ENCODE measurements at regions of chr12 and their contacts with region 1.

Region 1: DNA sequence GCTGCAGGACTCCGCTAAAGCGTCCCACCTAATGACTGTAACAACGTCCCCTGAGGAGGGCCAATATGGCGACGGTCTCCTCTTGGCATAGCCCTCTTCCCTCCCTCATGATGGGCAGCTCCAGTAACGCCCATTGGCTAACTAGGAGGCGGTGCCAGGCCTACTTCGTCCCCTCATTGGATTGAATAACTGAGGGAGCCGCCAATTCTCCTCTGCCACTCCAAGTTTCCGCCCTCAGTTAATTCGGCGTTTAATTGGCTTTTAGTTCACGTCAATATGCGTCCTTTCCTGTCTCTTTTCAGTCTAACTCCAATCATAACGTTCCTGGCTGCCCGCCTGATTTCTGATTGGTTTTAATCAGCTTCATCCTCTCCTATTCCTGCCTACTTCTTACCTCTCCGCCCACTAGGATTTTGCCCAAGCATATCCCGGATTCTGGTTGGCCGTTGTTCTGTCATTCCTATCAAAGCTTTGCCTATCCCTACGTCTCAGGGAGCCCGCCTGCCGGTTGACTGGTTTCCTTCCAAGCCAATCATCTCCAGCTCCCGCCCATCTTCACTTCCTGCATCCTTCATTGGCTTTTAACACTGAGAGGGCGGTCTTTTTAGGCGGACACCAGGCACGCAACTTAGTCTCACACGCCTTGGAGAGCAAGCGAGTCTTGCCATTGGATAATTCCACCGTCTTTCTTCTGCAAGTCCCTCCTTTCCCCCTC is 430 bp upstream of the SP1 start:
- DNase-seq: peak; percentile 100
- H3K4me3 ChIP-seq: peak overlapping the region; percentile 32 to 55 (median 45)
- H3K27ac ChIP-seq: peak overlapping the region; percentile 65
- H3K4me1 ChIP-seq: peaks cover 38% of the 10 kb centered on the region
- H3K27me3 ChIP-seq: no peaks in the 10 kb centered on the region
- CTCF ChIP-seq: no peak

Region 2: DNA sequence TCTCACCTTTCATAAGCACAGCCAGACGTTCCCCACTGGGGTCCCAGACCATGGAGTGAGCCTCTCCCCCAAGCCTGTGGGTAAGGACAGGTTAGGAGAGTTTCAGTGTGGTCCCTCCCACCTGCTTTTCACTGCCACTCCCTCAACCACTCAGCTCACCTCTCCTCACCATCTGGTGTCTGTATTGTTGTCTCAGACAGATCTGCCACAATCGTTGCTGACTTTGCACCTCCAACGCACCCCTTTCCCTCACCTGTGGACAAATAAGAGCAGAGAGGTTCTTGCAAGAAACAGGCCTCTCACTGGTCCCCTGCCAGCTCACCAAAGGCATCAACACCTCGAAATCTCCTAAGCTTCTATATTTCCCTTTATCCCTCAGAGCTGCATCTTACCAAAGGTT is 71.3 kb before region 1 on chr12:
- CTCF ChIA-PET with region 1: no interaction called
- dilution Hi-C with region 1: loop called (anchors 5 kb)
- in situ Hi-C with region 1: no loop called
- intact Hi-C with region 1: no loop called
- DNase-seq: no peak
- H3K4me3 ChIP-seq: no peak overlapping the region
- H3K27ac ChIP-seq: no peak overlapping the region
- H3K4me1 ChIP-seq: no peaks in the 10 kb centered on the region
- H3K27me3 ChIP-seq: no peaks in the 10 kb centered on the region
- CTCF ChIP-seq: no peak

Region 3: GRCh38 chr12:53344824-53345485 is 34.6 kb before region 1 on chr12:
- CTCF ChIA-PET with region 1: interaction called, 10 read pairs
- dilution Hi-C with region 1: no loop called
- in situ Hi-C with region 1: no loop called
- intact Hi-C with region 1: no loop called
- DNase-seq: peak; percentile 58
- H3K4me3 ChIP-seq: peak overlapping the region; percentile 59 to 65 (median 62)
- H3K27ac ChIP-seq: no peak overlapping the region
- H3K4me1 ChIP-seq: peaks cover 6% of the 10 kb centered on the region
- H3K27me3 ChIP-seq: no peaks in the 10 kb centered on the region
- CTCF ChIP-seq: peak; percentile 40 to 84

Region 4: DNA sequence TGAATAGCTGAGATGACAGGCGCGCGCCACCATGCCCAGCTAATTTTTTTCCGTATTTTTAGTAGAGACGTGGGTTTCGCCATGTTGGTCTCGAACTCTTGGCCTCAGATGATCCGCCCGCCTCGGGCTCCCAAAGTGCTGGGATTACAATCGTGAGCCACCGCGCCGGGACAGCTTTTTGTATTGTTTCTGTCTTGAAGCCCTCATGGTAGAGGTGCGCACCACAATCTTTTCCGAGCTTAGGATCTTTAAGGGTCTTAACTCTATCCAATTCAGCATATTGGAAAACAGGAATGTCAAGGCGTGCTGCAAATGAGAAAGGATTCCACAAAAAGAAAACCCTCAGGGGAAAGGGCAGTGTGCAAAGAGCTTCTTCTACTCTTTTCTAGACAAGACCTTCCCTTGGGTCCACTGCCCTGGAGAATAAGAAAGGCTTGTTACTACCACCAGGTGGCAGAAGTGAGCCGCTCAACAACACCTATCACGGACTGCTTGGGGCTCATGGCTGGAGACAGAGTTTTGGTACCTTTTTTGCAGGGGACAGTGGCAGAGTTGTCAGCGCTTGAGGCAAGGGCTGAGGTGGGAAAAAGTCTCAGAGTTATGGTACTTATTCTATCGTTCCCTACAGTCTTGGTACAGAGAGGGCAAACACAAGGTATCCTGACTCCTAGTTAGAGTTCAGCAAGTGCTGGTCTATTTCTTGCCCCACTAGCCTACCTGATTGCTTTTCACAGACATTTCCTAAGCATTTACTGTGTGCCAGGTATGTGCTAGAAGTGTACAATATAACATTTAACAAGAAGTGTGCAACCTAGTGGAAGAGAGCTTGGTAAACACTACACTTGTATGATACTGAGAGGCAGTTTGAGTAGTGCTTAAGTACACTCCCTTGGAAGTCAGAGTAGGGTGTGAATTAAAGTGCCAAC is 27.0 kb before region 1 on chr12:
- CTCF ChIA-PET with region 1: interaction called, 4 read pairs
- dilution Hi-C with region 1: no loop called
- in situ Hi-C with region 1: no loop called
- intact Hi-C with region 1: loop called (anchors 1 kb)
- DNase-seq: peak; percentile 72
- H3K4me3 ChIP-seq: no peak overlapping the region
- H3K27ac ChIP-seq: no peak overlapping the region
- H3K4me1 ChIP-seq: no peaks in the 10 kb centered on the region
- H3K27me3 ChIP-seq: no peaks in the 10 kb centered on the region
- CTCF ChIP-seq: peak; percentile 81 to 87

Region 5: DNA sequence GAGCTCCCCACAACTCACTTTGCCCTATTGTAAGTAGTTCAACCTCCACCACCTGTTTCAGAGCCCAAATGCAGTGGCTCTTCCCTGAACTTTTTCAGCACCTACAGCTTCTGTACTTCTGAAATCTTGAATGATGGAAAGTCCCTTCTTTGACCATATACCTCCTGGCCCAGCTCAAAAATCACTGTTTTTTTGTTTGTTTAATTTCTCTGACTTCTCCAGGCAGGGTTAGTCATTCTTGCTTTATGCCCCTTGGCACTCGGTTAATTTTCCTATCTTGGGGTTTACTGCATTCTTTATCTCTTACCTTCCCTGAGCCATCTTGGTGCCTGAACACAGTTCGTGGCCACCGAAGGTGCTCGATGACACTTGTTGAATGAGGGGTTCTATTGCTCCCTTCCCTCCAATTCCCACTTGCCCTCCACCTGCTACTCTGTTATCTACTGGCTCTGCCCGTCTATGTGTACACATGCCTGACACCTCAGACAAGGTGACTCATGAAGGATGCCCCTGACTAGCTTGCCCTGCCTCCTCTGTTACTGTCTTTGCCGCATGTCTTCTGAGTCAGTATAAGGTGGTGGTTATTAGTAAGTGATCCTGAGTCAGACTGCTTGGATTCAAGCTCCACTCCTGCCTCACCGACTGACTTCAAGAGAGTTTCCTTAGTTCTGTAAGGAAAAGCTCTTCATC is 48.5 kb after region 1 on chr12:
- CTCF ChIA-PET with region 1: no interaction called
- dilution Hi-C with region 1: loop called (anchors 5 kb)
- in situ Hi-C with region 1: no loop called
- intact Hi-C with region 1: no loop called
- DNase-seq: peak; percentile 98
- H3K4me3 ChIP-seq: no peak overlapping the region
- H3K27ac ChIP-seq: no peak overlapping the region
- H3K4me1 ChIP-seq: peaks cover 13% of the 10 kb centered on the region
- H3K27me3 ChIP-seq: no peaks in the 10 kb centered on the region
- CTCF ChIP-seq: no peak

Region 6: GRCh38 chr12:53441040-53441833 is 61.7 kb after region 1 on chr12 and contains the start of gene PRR13:
- CTCF ChIA-PET with region 1: no interaction called
- dilution Hi-C with region 1: no loop called
- in situ Hi-C with region 1: no loop called
- intact Hi-C with region 1: loop called (anchors 5 kb)
- DNase-seq: peak; percentile 99
- H3K4me3 ChIP-seq: peak within 1 kb of the TSS; percentile 55 to 87 (median 74)
- H3K27ac ChIP-seq: peak within 1 kb of the TSS; percentile 68
- H3K4me1 ChIP-seq: peaks cover 8% of the 10 kb centered on the region
- H3K27me3 ChIP-seq: no peaks in the 10 kb centered on the region
- CTCF ChIP-seq: peak in 1 of 2 donors; percentile 1
- total RNA-seq, gene PRR13: 43.5 to 158 TPM

Region 7: DNA sequence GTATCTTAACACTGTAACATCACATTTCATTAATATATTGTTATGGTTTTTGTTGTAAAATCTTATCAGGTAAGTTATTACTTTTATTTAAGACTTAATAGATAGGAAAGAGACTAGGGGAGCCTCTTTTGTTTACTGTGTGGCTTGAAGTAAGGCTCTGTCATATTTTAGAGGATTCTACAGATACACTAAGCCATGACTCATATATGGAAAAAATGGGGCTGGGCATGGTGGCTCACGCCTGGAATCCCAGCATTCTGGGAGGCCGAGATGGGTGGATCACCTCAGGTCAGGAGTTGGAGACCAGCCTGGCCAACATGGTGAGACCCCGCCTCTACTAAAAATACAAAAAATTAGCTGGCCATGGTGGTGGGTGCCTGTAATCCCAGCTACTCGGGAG is 151.4 kb after region 1 on chr12:
- CTCF ChIA-PET with region 1: no interaction called
- dilution Hi-C with region 1: no loop called
- in situ Hi-C with region 1: no loop called
- intact Hi-C with region 1: no loop called
- DNase-seq: peak; percentile 48
- H3K4me3 ChIP-seq: no peak overlapping the region
- H3K27ac ChIP-seq: no peak overlapping the region
- H3K4me1 ChIP-seq: no peaks in the 10 kb centered on the region
- H3K27me3 ChIP-seq: no peaks in the 10 kb centered on the region
- CTCF ChIP-seq: no peak

Region 8: GRCh38 chr12:53638057-53638456 is 258.5 kb after region 1 on chr12:
- CTCF ChIA-PET with region 1: no interaction called
- dilution Hi-C with region 1: no loop called
- in situ Hi-C with region 1: no loop called
- intact Hi-C with region 1: no loop called
- DNase-seq: no peak
- H3K4me3 ChIP-seq: no peak overlapping the region
- H3K27ac ChIP-seq: no peak overlapping the region
- H3K4me1 ChIP-seq: no peaks in the 10 kb centered on the region
- H3K27me3 ChIP-seq: no peaks in the 10 kb centered on the region
- CTCF ChIP-seq: no peak

Measured in mammary epithelial cell (primary cell).